ENCODE measurements at regions of chr9 and their contacts with region 1.

Region 1: DNA sequence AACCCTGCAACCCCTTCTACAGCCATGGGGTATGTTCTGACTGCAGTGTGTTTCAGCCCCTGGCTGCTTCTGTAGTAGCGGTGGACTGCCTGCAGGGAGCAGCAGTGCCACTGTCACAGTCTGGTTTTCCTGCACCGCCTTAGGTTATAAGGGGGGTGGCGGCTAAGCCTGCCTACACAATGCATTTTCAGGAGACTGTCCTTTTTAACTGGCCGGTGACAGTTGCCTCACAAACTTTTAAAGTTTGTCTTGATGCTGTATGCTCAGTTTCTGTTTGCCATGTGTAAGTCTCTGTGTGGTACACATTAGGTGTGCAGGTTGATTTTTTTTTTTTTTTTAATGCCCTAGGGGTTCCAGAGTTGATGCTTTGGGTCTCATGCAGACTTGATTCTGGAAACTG is 53.0 kb downstream of the NUP214 start:
- DNase-seq: peak; percentile 33 to 87 (median 74)

Region 2: GRCh38 chr9:131334629-131335367 is 156.4 kb after region 1 on chr9:
- intact Hi-C with region 1: loop called (anchors 5 kb)
- DNase-seq: peak in 4 of 42 donors; percentile 19 to 41 (median 30)

Measured in head of caudate nucleus (tissue), 42 donors.